ENCODE measurements at regions of chr12 and their contacts with region 1.

Region 1: DNA sequence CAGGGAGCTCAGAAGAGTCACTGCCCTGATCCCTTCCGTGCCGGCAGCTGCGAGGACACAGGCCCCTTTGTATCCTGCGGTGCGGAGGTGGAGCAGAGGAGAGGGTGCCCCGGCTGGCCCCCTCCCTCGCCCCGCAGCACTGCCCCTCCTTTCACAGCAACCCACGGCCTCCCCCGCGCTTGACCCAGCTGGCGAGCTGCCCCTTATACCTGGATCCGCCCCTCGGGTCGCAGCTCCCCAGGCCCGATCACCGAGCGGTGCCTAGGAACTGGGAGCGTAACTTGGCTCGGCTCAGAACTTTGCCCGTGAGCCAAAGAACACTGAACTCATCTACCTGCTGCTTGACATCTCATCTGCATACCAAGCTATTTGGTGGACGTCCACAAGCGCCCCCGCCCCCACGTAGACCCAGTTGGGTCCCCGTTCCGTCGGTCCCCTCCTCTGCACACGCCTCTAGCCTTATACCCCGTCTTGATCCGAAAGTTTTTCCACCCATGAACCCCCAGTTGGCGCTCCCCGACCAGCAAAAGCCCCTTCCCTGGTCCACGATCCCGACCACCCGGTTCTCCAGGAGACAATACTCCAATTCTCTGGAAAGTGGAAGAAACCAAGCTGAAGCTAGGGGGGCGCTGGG is 697 bp upstream of the DNAJC14 start:
- DNase-seq: peak; percentile 53 to 82 (median 70)
- ATAC-seq: peak; percentile 52
- H3K4me3 ChIP-seq: peak overlapping the region; percentile 78
- H3K27ac ChIP-seq: peak overlapping the region; percentile 83
- H3K4me1 ChIP-seq: peaks cover 28 to 42% of the 10 kb centered on the region in 2 experiments; a peak in 4 of 5 replicates
- H3K27me3 ChIP-seq: no peaks in the 10 kb centered on the region
- CTCF ChIP-seq: peak in 1 of 3 experiments; percentile 29; a peak in 2 of 6 replicates
- EP300 ChIP-seq: no peak
- POLR2A ChIP-seq: no peak
- RAD21 ChIP-seq: no peak; a peak in 1 of 4 replicates

Region 2: DNA sequence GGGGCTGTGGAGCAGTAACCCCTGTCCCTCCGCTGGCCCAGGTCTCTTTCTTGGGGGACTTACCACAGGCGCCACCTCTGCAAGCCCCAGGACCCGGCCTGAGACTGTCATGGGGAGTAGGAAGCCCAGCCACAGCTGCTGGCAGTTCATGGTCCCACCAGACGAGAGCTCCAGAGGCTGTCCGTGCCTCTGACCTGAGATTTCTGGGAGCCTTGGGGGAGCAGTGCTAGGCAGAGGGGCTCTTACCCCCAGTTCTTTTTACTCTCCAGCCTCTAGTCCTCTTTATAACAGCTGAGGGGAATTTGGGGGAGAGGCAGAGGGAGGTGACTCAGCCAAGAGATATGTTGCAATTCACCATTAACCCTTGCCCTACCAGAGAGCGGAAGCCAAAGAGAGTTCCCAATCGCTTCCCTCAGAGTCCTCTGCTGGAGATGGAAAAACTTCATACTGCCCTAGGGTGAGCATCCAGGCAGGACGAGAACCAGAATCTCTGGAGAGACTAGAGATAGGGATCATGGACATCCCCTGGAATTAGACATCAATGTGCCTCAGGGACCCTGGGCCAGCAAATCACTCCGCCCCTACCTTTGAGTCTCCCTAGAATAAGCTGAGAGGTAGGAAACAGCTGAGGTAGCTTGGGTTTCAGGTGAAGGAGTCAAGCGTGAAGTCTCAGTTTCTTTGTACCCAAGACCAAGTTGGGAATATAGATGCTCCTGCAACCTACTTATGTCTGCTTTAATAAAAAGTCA is 12.8 kb after region 1 on chr12 and contains the start of gene MMP19:
- CTCF ChIA-PET with region 1: no interaction called
- POLR2A ChIA-PET with region 1: interaction called, 17 read pairs
- in situ Hi-C with region 1: no loop called
- intact Hi-C with region 1: no loop called
- DNase-seq: peak; percentile 57 to 74 (median 66)
- ATAC-seq: peak; percentile 82
- H3K4me3 ChIP-seq: peak within 1 kb of the TSS; percentile 34
- H3K27ac ChIP-seq: peak within 1 kb of the TSS; percentile 31; the same call in 1 of the 3 replicates
- H3K4me1 ChIP-seq: peaks cover 15 to 23% of the 10 kb centered on the region in 2 experiments
- H3K27me3 ChIP-seq: no peaks in the 10 kb centered on the region
- CTCF ChIP-seq: 0 out of 6 replicates have a peak, but pooled peaks of 1 of the 3 experiments have one; percentile 0
- EP300 ChIP-seq: peak; percentile 45; the same call in 1 of the 2 replicates
- POLR2A ChIP-seq: no peak
- RAD21 ChIP-seq: no peak
- polyA plus RNA-seq, gene MMP19: 0.25 to 0.56 TPM

Measured in K562 (cell line).